ENCODE measurements at regions of chr2 and their contacts with region 1.

Region 1: GRCh38 chr2:238358769-238359168 is 38.5 kb downstream of the TRAF3IP1 start:
- DNase-seq: no peak

Region 2: DNA sequence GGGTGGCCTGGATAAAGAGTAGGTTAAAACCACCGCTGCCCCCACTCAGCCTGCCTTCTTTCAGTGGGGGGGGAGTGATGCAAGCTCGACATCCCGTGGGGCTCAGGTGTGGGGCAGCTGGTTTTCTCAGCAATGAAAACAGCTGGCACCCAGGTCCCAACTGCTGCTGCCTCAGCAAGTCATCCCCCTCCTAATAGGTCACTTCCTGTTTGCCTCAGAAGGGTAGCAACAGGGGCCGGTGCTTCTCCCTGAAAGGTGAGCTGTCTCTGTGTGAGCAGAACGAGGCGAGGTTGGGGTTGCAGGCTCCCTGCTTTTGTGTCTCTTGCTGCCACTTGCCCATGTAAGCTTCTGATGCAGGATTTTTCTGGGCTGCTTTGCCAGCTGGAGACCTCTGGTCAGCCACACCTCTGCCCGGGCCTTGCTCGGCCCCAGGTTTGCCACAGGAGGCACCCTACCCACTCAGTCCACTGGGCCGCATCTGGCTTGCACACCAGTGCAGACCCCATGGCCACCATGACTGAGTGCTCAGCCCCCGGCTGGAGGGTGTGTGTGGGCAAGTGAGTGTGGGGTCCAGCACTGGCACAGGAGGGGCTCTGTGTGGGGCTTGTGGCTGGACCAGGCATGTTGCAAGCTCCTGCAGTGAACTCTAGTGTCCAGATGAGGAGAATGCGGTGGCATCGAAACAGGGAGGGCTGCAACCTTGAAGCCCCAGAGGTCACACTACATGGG is 56.4 kb after region 1 on chr2:
- intact Hi-C with region 1: loop called (anchors 5 kb)
- DNase-seq: no peak

Measured in cardiac septum (tissue), 1 donor.